A673 (cell line): ENCODE measurements at regions of chr12 and their contacts with region 1.

Region 1: DNA sequence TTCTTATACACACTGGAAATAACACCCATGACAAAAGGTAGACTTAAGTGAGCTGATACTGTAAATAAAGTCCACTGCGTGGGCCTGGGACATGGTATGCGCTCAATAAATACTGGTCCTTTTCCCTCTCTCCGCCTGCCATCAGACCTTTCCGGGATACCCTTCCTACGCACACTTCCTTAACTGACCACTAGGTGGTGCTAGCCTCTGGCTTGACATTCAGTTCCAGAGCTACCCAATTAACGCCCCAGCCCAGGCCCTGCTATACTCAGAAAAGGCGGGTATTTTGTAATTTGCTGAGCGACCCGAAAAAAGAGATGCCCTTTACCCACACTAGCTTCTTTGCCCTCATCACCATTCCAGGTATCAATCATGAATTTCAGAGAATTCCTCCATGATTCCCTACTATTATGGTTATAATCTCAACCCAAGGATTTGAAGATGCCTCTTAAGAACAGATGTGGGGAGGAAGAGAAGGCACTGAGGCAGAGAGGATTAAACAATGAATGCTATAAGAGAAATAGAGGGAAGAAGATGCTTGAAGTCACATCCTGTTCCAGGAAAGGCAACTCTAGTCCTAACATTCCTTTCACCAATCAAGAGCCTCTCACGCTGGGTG is 3.9 kb upstream of the LRP1 start:
- DNase-seq: peak; percentile 86
- H3K4me3 ChIP-seq: no peak overlapping the region
- H3K27ac ChIP-seq: no peak overlapping the region
- H3K4me1 ChIP-seq: peaks cover 4% of the 10 kb centered on the region
- H3K27me3 ChIP-seq: no peaks in the 10 kb centered on the region
- CTCF ChIP-seq: peak; percentile 93

Region 2: GRCh38 chr12:57138526-57139272 is 14.3 kb after region 1 on chr12:
- CTCF ChIA-PET with region 1: interaction called, 10 read pairs
- POLR2A ChIA-PET with region 1: no interaction called
- intact Hi-C with region 1: no loop called
- DNase-seq: no peak
- H3K4me3 ChIP-seq: no peak overlapping the region
- H3K27ac ChIP-seq: no peak overlapping the region
- H3K4me1 ChIP-seq: peaks cover 11% of the 10 kb centered on the region
- H3K27me3 ChIP-seq: no peaks in the 10 kb centered on the region
- CTCF ChIP-seq: no peak

Region 3: DNA sequence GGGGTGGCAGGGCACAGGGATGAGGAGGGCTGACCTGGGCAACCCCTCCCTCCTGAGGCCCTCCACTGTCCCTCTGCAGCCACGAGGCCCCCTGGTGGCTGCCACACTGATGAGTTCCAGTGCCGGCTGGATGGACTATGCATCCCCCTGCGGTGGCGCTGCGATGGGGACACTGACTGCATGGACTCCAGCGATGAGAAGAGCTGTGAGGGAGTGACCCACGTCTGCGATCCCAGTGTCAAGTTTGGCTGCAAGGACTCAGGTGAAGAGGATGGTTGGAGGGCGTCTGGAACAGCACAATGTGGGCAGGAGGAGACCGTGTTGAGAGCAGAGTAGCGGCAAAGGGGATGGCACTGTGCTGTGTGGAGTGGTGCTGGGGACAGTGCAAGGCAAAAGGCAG is 48.7 kb after region 1 on chr12:
- CTCF ChIA-PET with region 1: interaction called, 4 read pairs
- POLR2A ChIA-PET with region 1: no interaction called
- intact Hi-C with region 1: loop called (anchors 2 kb)
- DNase-seq: peak; percentile 36
- H3K4me3 ChIP-seq: no peak overlapping the region
- H3K27ac ChIP-seq: no peak overlapping the region
- H3K4me1 ChIP-seq: no peaks in the 10 kb centered on the region
- H3K27me3 ChIP-seq: no peaks in the 10 kb centered on the region
- CTCF ChIP-seq: peak; percentile 68

Region 4: GRCh38 chr12:57182921-57183790 is 58.8 kb after region 1 on chr12:
- CTCF ChIA-PET with region 1: interaction called, 5 read pairs
- POLR2A ChIA-PET with region 1: no interaction called
- intact Hi-C with region 1: loop called (anchors 2 kb)
- DNase-seq: peak; percentile 79
- H3K4me3 ChIP-seq: no peak overlapping the region
- H3K27ac ChIP-seq: no peak overlapping the region
- H3K4me1 ChIP-seq: no peaks in the 10 kb centered on the region
- H3K27me3 ChIP-seq: no peaks in the 10 kb centered on the region
- CTCF ChIP-seq: peak; percentile 91